ENCODE measurements at regions of chr15 and their contacts with region 1.

Region 1: DNA sequence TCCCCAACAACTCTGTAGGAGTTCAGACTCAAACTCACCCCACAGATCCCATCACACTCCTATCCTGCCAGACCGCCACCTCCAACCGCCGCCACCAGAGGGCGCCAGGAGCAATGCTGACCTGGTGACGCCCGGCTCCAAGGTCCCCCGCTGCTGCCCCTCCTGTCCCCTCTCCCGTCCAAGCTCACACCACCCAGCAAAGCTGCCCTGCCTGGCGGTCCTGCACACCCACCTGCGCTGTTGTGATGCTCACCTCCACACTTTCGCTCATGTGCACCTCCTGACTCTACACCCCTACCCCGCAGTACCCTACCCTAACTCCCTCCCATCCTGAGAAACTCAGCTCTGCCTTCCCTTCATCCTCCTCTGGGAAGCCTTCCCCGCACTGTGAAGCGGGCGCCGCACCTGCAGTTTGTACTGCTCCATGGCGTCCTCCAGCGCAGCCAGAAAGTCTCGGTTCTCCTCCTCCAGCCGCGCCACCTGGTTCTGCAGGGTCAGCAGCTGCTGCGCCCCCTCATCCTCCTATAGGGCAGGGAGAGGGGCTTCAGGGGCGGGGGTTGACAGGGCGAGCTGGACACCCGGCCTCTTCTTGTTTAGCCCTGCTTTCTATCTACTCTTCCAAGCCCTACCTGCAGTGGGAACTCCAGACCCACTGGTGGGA is 7.9 kb downstream of the KIF7 start:
- DNase-seq: peak in 1 of 2 experiments; percentile 73
- H3K4me3 ChIP-seq: no peak overlapping the region
- H3K27ac ChIP-seq: no peak overlapping the region
- H3K4me1 ChIP-seq: no peaks in the 10 kb centered on the region
- H3K27me3 ChIP-seq: no peaks in the 10 kb centered on the region
- CTCF ChIP-seq: peak; percentile 89

Region 2: DNA sequence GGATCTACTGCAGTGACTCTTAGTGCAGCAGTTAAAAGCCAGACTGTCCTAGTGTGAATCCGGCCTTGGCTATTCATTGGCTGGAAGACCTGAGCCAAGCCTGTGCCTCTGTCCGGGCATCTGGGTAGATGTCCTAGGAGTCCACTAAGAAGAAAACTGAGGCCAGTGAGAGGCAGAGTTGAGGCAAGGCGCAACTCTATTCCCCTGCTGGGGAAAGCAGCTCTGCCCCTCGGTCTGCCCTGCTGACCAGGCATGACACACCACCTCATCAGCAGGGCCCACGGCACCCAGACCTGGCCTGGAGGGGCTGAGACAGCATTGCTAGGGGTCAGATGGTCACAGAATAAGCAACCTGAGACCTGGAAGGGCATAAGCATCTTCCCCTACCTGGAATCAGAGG is 605.8 kb before region 1 on chr15:
- CTCF ChIA-PET with region 1: no interaction called
- POLR2A ChIA-PET with region 1: no interaction called
- intact Hi-C with region 1: no loop called
- DNase-seq: no peak
- H3K4me3 ChIP-seq: no peak overlapping the region
- H3K27ac ChIP-seq: no peak overlapping the region
- H3K4me1 ChIP-seq: no peaks in the 10 kb centered on the region
- H3K27me3 ChIP-seq: peaks cover 7% of the 10 kb centered on the region; the same call in 1 of the 2 replicates
- CTCF ChIP-seq: no peak

Region 3: GRCh38 chr15:89599021-89599420 is 48.3 kb before region 1 on chr15:
- CTCF ChIA-PET with region 1: interaction called, 14 read pairs
- POLR2A ChIA-PET with region 1: no interaction called
- intact Hi-C with region 1: no loop called
- DNase-seq: no peak
- H3K4me3 ChIP-seq: no peak overlapping the region
- H3K27ac ChIP-seq: no peak overlapping the region
- H3K4me1 ChIP-seq: no peaks in the 10 kb centered on the region
- H3K27me3 ChIP-seq: no peaks in the 10 kb centered on the region
- CTCF ChIP-seq: no peak

Region 4: GRCh38 chr15:89690276-89691218 is 43.2 kb after region 1 on chr15 and contains the starts of genes PEX11A and WDR93:
- CTCF ChIA-PET with region 1: no interaction called
- POLR2A ChIA-PET with region 1: no interaction called
- intact Hi-C with region 1: loop called (anchors 1 kb)
- DNase-seq: peak; percentile 75 to 84
- H3K4me3 ChIP-seq: peak within 1 kb of the TSS; percentile 82
- H3K27ac ChIP-seq: 0 out of 2 replicates have a peak within 1 kb of the TSS, but pooled peaks have one; percentile 24
- H3K4me1 ChIP-seq: peaks cover 36% of the 10 kb centered on the region
- H3K27me3 ChIP-seq: no peaks in the 10 kb centered on the region
- CTCF ChIP-seq: no peak
- total RNA-seq, gene PEX11A: 11.7 and 12.8 TPM in 2 replicates
- total RNA-seq, gene WDR93: 1.1 and 1.8 TPM in 2 replicates

Region 5: GRCh38 chr15:89888214-89888804 is 241.0 kb after region 1 on chr15:
- CTCF ChIA-PET with region 1: no interaction called
- POLR2A ChIA-PET with region 1: no interaction called
- intact Hi-C with region 1: loop called (anchors 1 kb)
- DNase-seq: peak; percentile 32 to 60
- H3K4me3 ChIP-seq: no peak overlapping the region
- H3K27ac ChIP-seq: no peak overlapping the region
- H3K4me1 ChIP-seq: peaks cover 14% of the 10 kb centered on the region
- H3K27me3 ChIP-seq: no peaks in the 10 kb centered on the region
- CTCF ChIP-seq: peak; percentile 67

Region 6: GRCh38 chr15:90059208-90059985 is 412.1 kb after region 1 on chr15:
- CTCF ChIA-PET with region 1: no interaction called
- POLR2A ChIA-PET with region 1: no interaction called
- intact Hi-C with region 1: no loop called
- DNase-seq: no peak
- H3K4me3 ChIP-seq: no peak overlapping the region
- H3K27ac ChIP-seq: no peak overlapping the region
- H3K4me1 ChIP-seq: no peaks in the 10 kb centered on the region
- H3K27me3 ChIP-seq: no peaks in the 10 kb centered on the region
- CTCF ChIP-seq: no peak